Heart left ventricle (tissue), 16 donors: ENCODE measurements at regions of chr4 and their contacts with region 1.

Region 1: DNA sequence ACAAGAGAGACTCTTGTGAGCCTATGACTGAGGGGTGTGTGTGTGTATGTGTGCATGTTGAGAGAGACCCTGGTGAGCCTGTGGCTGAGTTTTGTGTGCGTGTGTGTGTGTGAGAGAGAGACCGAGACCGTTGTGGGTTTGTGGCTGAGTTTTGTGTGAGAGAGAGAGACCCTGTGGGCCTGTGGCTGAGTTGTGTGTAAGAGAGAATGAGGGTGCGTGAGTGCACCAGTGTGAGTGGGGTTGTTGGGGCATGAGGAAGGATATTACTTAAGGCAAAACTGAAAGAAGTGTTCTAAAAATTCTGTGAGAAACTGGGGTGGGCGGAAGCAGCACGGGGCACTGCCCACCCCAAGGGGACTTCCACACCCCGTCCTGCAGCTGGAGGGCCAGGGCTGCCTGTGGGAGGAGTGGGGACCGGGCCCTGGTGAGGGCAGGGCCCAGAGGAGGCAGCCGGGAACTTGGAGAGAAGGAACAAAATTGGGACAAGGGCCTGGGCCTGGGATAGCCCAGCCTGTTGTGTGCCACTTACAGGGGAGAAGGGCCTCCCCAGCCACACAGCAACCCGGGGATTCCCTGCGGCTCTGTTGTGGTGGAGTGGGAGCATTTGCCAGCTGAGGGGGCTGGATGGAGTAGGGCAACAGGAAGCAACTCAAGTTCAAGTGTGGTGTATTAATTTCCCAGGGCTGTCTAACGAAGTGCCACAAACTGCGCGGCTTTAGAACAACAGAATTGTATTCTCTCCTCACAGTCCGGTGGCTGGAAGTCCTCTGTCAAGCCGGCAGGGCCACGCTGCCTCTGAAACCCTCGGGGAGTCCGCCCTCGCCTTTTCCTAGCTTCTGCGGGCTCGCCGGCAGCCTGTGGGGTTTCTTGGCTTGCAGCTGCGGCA is 22.1 kb downstream of the TMEM131L start:
- DNase-seq: peak; percentile 65 to 75 (median 67)
- ATAC-seq: peak; percentile 34 to 61 (median 48)
- H3K4me3 ChIP-seq: peak overlapping the region in 10 of 12 donors; percentile 1 to 46 (median 24)
- H3K27ac ChIP-seq: peak overlapping the region; percentile 33 to 87 (median 77)
- H3K4me1 ChIP-seq: peaks cover 17 to 69% (median 57%) of the 10 kb centered on the region in 12 donors
- H3K27me3 ChIP-seq: no peaks in the 10 kb centered on the region
- CTCF ChIP-seq: no peak
- POLR2A ChIP-seq: no peak

Region 2: DNA sequence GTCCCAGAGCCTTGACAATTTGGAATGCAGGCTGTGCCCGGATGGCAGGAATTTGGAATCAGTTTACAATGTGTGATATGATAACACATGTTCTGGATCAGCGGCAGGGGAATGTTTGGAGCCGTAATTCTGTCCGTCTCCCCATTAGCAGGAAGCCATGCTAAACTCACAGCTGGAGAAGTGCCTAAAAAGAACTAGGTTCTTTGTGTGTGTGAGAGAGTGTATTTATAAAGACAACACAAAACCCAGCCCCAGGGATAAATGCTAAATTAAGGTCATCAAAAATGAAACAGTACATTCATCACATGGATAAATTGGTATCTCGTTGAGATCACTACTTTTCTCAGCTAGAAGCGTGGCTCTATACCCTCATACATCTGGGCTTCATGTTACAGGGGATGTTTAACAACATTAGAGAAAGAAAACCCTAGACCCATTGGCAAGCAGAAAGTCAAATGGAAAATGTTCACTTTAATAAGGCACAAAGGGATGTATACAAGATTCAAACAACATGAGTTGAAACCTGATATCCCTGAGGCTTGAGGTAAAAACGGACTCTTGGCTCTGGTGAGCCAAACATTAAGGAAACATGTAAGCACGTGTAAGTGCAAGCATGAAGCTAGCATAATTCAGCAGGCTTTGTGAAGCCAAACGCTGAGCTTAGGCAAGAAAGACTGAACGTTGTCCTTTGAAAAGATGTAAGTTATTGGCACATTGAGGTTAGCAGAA is 40.1 kb before region 1 on chr4:
- intact Hi-C with region 1: no loop called
- DNase-seq: no peak
- ATAC-seq: peak in 1 of 4 donors; percentile 42
- H3K4me3 ChIP-seq: peak overlapping the region in 4 of 12 donors; percentile 6 to 14 (median 10)
- H3K27ac ChIP-seq: peak overlapping the region in 2 of 12 donors; percentile 0 to 9
- H3K4me1 ChIP-seq: peaks cover 0 to 19% (median 4%) of the 10 kb centered on the region in 12 donors
- H3K27me3 ChIP-seq: no peaks in the 10 kb centered on the region
- CTCF ChIP-seq: no peak
- POLR2A ChIP-seq: no peak

Region 3: DNA sequence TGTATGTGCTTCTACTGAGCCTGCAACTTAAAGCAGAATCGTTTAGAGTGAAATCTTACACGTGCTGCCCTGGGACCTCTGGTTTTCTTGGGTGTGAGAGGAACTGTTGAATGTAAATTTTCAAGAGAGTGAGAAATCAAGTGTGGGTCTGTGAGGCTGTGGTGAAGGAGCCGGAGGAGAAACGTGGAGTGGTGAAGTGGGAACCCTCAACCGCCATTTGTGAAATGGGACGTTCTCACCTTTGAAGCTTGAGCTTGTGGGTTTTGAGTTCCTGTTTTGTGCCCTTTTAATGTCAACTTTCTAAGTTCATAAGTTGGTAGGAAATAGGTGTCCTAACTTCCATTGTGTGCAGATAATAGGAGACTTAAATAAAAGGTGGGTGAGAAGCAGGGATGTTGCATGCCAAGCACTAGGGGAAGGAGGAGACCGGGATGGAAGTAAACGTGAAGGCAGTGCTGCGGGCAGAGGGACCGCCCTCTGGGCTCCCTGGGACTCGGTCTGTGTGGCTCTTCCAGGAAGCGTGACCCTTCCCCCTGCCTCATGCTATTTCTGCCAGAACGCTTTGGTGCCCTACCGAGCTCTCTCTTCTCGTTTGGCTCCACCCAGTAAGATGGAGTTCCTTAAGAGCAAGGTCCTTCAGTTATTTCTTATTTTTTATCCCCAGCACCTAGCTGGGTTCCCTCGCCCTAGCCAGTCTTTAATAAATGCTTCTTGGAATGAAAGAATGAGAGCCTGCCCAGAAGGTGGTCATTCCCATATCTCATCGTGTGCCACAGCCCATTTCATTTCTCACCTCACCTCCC is 34.0 kb after region 1 on chr4:
- intact Hi-C with region 1: loop called in 1 of 10 experiments (anchors 5 kb)
- DNase-seq: no peak
- ATAC-seq: no peak
- H3K4me3 ChIP-seq: peak overlapping the region in 1 of 12 donors; percentile 9
- H3K27ac ChIP-seq: peak overlapping the region in 1 of 12 donors; percentile 74
- H3K4me1 ChIP-seq: peaks cover 0 to 92% (median 52%) of the 10 kb centered on the region in 12 donors
- H3K27me3 ChIP-seq: no peaks in the 10 kb centered on the region
- CTCF ChIP-seq: no peak
- POLR2A ChIP-seq: no peak

Region 4: DNA sequence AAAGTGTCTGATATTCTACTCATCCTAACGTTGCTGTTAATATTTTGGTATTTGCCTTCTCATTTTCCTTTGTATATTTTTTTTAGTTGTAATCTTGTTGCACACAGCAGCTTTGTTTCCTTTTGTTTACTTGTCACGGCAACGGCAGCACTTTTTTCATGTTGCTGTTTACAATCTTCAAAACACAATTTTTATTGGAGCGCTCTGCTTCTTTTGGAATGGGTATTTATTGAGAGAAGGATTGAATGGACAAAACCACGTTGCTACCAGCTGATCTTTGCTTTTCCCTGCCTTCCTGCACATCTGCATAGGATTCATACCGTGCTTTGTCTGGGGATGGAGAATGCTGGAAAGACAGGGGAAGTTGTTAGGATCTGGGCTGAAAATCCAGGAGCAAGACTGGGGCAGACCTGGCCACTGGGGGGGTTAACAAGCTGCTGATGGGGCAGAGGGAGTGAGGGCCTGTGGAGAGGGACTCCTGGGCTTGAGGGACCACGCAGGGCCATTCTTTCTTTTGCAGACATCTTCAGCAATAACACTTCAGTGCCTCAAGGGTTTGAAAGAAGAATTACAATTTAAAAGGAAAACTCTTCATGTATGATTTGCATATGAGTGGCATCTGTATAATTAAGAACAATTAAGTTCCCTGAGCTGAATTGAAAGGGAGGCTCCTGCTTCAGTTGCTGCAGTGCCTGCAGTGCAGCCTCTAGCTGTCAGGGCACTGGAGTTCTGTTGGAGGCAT is 47.7 kb after region 1 on chr4:
- intact Hi-C with region 1: loop called in 1 of 10 experiments (anchors 10 kb)
- DNase-seq: no peak
- ATAC-seq: no peak
- H3K4me3 ChIP-seq: no peak overlapping the region
- H3K27ac ChIP-seq: peak overlapping the region in 1 of 12 donors; percentile 10
- H3K4me1 ChIP-seq: peaks cover 4 to 83% (median 57%) of the 10 kb centered on the region in 12 donors
- H3K27me3 ChIP-seq: no peaks in the 10 kb centered on the region
- CTCF ChIP-seq: peak in 1 of 12 donors; percentile 8
- POLR2A ChIP-seq: no peak

Region 5: GRCh38 chr4:153564630-153565525 is 76.6 kb after region 1 on chr4:
- intact Hi-C with region 1: loop called in 1 of 10 experiments (anchors 10 kb)
- DNase-seq: peak in 1 of 5 donors; percentile 39
- ATAC-seq: peak; percentile 59 to 86 (median 77)
- H3K4me3 ChIP-seq: no peak overlapping the region
- H3K27ac ChIP-seq: peak overlapping the region in 11 of 12 donors; percentile 42 to 80 (median 67)
- H3K4me1 ChIP-seq: peaks cover 0 to 48% (median 23%) of the 10 kb centered on the region in 12 donors
- H3K27me3 ChIP-seq: no peaks in the 10 kb centered on the region
- CTCF ChIP-seq: no peak
- POLR2A ChIP-seq: peak in 1 of 2 donors; percentile 9

Region 6: DNA sequence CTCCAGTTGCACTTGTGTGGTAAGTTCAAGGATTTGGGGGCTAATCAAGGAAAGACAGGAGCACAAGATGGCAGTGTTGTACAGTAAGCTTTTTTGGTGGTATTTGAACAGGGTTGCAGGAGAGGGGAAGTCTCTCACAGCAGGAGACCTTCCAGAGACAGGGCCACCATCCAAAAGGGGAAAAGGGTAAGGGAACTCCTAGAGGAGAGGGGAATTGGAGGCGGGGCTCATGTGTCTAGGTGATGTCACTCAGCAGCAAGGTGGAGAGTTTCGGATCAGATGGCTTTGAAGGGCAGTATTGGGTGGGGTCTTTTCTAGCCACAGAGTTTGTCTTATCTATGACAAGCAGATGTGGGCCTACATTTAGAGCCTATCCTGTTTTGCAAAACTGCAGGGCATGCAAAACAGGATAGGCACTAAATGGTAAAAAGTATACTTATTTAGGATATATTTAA is 285.0 kb after region 1 on chr4:
- intact Hi-C with region 1: no loop called
- DNase-seq: no peak
- ATAC-seq: no peak
- H3K4me3 ChIP-seq: no peak overlapping the region
- H3K27ac ChIP-seq: no peak overlapping the region
- H3K4me1 ChIP-seq: no peaks in the 10 kb centered on the region
- H3K27me3 ChIP-seq: peaks cover 0 to 29% (median 0%) of the 10 kb centered on the region in 9 donors
- CTCF ChIP-seq: no peak
- POLR2A ChIP-seq: no peak